Activated CD8-positive, alpha-beta T cell treated with anti-CD3 and anti-CD28 coated beads for 36 hours (primary cell): ENCODE measurements at regions of chr20 and their contacts with region 1.

Region 1: GRCh38 chr20:44885392-44886265 is at the start of gene YWHAB:
- DNase-seq: peak; percentile 99
- ATAC-seq: peak; percentile 98
- H3K4me3 Mint-ChIP-seq: peak within 1 kb of the TSS; percentile 90
- H3K27ac Mint-ChIP-seq: peak within 1 kb of the TSS; percentile 92
- H3K4me1 Mint-ChIP-seq: peaks cover 44% of the 10 kb centered on the region
- H3K27me3 Mint-ChIP-seq: no peaks in the 10 kb centered on the region
- CTCF ChIP-seq: no peak
- total RNA-seq, gene YWHAB: 220 to 226 TPM

Region 2: GRCh38 chr20:44897133-44897532 is 11.5 kb after region 1 on chr20:
- CTCF ChIA-PET with region 1: interaction called, 12 read pairs
- POLR2A ChIA-PET with region 1: interaction called, 5 read pairs
- intact Hi-C with region 1: no loop called
- DNase-seq: no peak
- ATAC-seq: no peak
- H3K4me3 Mint-ChIP-seq: no peak overlapping the region
- H3K27ac Mint-ChIP-seq: peak overlapping the region; percentile 39
- H3K4me1 Mint-ChIP-seq: peaks cover 77% of the 10 kb centered on the region
- H3K27me3 Mint-ChIP-seq: no peaks in the 10 kb centered on the region
- CTCF ChIP-seq: no peak

Region 3: GRCh38 chr20:44909872-44910689 is 24.5 kb after region 1 on chr20 and contains the start of gene PABPC1L:
- CTCF ChIA-PET with region 1: interaction called, 14 read pairs
- POLR2A ChIA-PET with region 1: interaction called, 8 read pairs
- intact Hi-C with region 1: no loop called
- DNase-seq: peak; percentile 83
- ATAC-seq: peak; percentile 96
- H3K4me3 Mint-ChIP-seq: peak within 1 kb of the TSS; percentile 85
- H3K27ac Mint-ChIP-seq: peak within 1 kb of the TSS; percentile 72
- H3K4me1 Mint-ChIP-seq: peaks cover 36% of the 10 kb centered on the region
- H3K27me3 Mint-ChIP-seq: no peaks in the 10 kb centered on the region
- CTCF ChIP-seq: no peak
- total RNA-seq, gene PABPC1L: 88.4 to 93.8 TPM